WTC11 (cell line): ENCODE measurements at regions of chr16 and their contacts with region 1.

Region 1: DNA sequence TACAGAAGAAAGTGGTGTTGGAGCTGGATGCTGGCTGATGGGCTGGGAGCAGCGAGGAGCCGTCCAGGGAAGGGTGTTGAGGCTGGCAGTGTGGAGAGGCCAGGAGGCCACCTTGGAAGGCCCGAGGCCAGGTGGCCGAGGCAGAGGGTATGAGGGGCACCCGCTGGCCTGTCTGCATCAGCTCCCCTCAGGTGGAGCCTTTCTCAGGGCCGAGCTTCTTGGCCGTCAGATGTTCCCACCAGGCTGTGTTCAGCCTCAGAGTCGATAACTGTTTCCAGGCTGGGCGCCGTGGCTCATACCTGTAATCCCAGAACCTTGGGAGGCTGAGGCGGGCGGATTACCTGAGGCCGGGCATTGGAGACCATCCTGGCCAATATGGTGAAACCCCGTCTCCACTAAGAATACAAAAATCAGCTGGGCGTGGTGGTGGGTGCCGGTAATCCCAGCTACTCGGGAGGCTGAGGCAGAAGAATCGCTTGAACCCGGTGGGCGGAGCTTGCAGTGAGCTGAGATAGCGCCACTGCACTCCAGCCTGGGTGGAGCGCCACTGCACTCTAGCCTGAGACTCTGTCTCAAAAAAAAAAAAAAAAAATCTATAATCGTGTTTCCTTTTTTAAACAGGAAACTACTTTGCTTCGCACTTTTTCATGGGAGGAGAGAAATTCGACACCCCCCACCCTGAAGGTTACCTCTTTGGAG is 25.3 kb downstream of the MGRN1 start:
- DNase-seq: no peak
- ATAC-seq: no peak
- H3K4me3 Mint-ChIP-seq: no peak overlapping the region
- H3K27ac Mint-ChIP-seq: peak overlapping the region; percentile 57; the same call in 1 of the 2 replicates
- H3K4me1 Mint-ChIP-seq: no peaks in the 10 kb centered on the region
- H3K27me3 Mint-ChIP-seq: no peaks in the 10 kb centered on the region; the same call in 1 of the 2 replicates
- CTCF ChIP-seq: no peak

Region 2: DNA sequence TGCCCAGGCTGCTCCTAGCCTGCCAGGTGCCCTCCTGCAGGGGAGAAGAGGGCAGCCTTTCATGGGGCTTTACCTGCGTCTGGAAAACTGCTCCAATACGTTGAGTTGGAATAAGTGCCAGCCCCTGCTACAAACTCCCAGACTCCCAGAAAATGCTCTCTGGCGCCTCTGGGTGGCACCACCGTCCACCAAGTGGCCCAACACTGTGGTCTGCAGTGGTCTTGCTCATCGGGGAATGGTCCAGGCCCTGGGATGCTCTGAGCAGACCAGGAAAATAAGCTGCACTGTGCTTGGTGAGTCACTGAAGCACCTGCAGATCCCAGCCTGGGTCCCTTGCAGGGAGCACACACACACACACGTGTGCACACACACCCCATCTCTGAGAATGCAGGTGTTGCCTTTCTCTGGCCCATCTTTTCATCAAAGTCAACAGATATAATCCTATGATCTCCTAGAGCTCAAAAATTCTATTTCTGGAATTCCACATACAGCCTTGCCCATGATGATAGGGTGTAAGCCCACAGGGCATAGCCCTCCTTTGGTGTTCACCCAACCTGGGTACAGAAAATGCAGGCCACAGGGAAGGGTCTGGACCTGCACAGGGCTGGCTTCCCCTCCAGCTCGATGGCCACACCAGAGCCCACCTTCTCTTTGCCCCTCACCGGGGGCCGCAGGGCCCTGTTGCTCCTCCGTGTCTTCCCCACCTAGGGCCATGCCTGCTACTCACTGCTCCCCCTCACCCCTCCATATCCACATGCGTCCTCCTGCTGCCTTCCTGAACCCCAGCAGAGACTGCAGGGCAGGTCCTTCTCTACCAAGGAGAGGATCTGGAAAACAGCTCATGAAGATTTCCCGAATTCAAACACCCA is 131.8 kb before region 1 on chr16:
- CTCF ChIA-PET with region 1: interaction called, 15 read pairs
- POLR2A ChIA-PET with region 1: no interaction called
- DNase-seq: peak; percentile 80
- ATAC-seq: peak; percentile 89
- H3K4me3 Mint-ChIP-seq: no peak overlapping the region
- H3K27ac Mint-ChIP-seq: peak overlapping the region; percentile 80
- H3K4me1 Mint-ChIP-seq: peaks cover 43% of the 10 kb centered on the region
- H3K27me3 Mint-ChIP-seq: no peaks in the 10 kb centered on the region
- CTCF ChIP-seq: peak; percentile 62

Region 3: DNA sequence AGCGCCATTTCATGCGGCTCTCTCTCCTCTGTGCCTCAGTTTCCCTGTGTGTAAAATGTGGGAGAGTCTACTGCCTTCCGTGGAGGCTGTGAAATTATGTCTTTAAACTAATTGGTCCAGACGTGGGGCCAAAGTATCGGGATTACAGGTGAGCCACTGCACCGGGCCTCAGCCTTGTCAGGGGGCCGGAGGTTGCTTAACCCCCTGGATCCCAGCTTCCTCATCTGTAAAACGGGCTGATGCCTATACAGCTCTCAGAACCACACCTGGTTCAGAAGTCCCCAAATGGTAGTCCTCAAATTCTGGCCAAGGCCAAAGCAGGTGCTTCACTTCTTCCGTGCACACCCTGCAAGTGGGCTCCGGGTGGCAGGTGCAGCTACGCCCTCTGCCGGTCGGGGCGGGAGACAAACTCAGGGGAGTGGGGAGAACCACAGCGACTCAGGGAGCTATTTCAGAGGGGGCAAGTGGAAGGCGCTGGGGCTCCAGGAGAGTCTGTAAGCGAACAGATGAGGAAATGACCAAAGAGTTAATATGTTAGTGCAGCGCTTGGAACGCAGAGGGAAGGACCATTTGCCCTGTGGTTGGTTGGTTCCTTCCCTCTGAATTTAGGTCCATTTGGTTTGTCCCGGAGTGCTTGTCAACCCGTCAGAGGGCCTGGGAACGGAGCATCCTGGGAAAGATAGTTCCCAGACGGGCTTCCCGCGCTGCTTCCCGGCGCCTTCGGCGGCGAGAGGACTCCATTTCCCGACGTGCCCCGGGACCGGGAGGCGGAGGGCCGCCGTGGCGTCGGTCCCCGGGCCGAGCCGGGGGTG is 25.7 kb before region 1 on chr16 and contains the start of gene MGRN1:
- CTCF ChIA-PET with region 1: interaction called, 13 read pairs
- POLR2A ChIA-PET with region 1: no interaction called
- DNase-seq: peak; percentile 94
- ATAC-seq: peak; percentile 93
- H3K4me3 Mint-ChIP-seq: peak within 1 kb of the TSS; percentile 97
- H3K27ac Mint-ChIP-seq: peak within 1 kb of the TSS; percentile 97
- H3K4me1 Mint-ChIP-seq: peaks cover 17% of the 10 kb centered on the region
- H3K27me3 Mint-ChIP-seq: no peaks in the 10 kb centered on the region
- CTCF ChIP-seq: peak; percentile 84
- total RNA-seq, gene MGRN1: 79.4 to 88.8 TPM (median 80.7 TPM) in 3 replicates

Region 4: DNA sequence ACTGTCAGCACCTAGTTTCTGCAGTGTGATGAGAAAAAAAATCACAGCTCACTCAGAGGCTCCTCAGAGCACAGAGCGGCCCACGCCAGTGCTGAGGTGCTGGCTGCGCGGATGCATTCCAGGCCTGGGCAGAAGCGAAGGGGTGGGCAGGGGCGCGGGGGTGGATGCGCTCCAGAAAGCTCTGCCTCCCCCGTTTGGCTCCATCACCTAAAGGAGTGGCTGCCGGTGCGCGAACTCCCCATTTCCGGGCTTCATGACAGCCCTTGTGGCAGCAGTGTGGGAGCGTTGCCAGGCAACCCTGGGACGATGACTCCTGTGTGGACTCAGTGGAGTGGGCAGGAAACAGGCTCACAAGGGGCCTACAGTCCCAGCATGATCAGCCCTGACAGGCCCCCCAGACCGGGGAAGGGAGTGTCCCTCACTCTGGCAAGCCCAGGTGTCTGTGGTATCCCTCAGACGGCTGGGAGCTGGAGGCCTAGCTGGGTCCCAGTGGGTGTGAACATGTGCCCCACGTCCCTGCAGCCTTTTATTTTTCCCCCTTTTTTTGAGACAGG is 10.6 kb after region 1 on chr16:
- CTCF ChIA-PET with region 1: interaction called, 19 read pairs
- POLR2A ChIA-PET with region 1: interaction called, 3 read pairs
- DNase-seq: no peak
- ATAC-seq: no peak
- H3K4me3 Mint-ChIP-seq: no peak overlapping the region
- H3K27ac Mint-ChIP-seq: peak overlapping the region; percentile 78; the same call in 1 of the 2 replicates
- H3K4me1 Mint-ChIP-seq: peaks cover 4% of the 10 kb centered on the region
- H3K27me3 Mint-ChIP-seq: no peaks in the 10 kb centered on the region
- CTCF ChIP-seq: no peak

Region 5: GRCh38 chr16:4682616-4683254 is 32.8 kb after region 1 on chr16:
- CTCF ChIA-PET with region 1: interaction called, 34 read pairs
- POLR2A ChIA-PET with region 1: no interaction called
- DNase-seq: peak; percentile 86
- ATAC-seq: peak; percentile 92
- H3K4me3 Mint-ChIP-seq: no peak overlapping the region
- H3K27ac Mint-ChIP-seq: no peak overlapping the region
- H3K4me1 Mint-ChIP-seq: no peaks in the 10 kb centered on the region
- H3K27me3 Mint-ChIP-seq: no peaks in the 10 kb centered on the region
- CTCF ChIP-seq: peak; percentile 49; the same call in 1 of the 2 replicates

Region 6: GRCh38 chr16:4734063-4734729 is 84.3 kb after region 1 on chr16 and contains the starts of genes ANKS3 and DNAAF8:
- CTCF ChIA-PET with region 1: interaction called, 10 read pairs
- POLR2A ChIA-PET with region 1: no interaction called
- DNase-seq: peak; percentile 95
- ATAC-seq: peak; percentile 94
- H3K4me3 Mint-ChIP-seq: peak within 1 kb of the TSS; percentile 93
- H3K27ac Mint-ChIP-seq: peak within 1 kb of the TSS; percentile 97
- H3K4me1 Mint-ChIP-seq: peaks cover 9% of the 10 kb centered on the region
- H3K27me3 Mint-ChIP-seq: peaks cover 4% of the 10 kb centered on the region; the same call in 1 of the 2 replicates
- CTCF ChIP-seq: no peak
- total RNA-seq, gene ANKS3: 28.6 to 35.6 TPM (median 31.5 TPM) in 3 replicates
- total RNA-seq, gene DNAAF8: 0.09 to 0.41 TPM (median 0.14 TPM) in 3 replicates

Region 7: DNA sequence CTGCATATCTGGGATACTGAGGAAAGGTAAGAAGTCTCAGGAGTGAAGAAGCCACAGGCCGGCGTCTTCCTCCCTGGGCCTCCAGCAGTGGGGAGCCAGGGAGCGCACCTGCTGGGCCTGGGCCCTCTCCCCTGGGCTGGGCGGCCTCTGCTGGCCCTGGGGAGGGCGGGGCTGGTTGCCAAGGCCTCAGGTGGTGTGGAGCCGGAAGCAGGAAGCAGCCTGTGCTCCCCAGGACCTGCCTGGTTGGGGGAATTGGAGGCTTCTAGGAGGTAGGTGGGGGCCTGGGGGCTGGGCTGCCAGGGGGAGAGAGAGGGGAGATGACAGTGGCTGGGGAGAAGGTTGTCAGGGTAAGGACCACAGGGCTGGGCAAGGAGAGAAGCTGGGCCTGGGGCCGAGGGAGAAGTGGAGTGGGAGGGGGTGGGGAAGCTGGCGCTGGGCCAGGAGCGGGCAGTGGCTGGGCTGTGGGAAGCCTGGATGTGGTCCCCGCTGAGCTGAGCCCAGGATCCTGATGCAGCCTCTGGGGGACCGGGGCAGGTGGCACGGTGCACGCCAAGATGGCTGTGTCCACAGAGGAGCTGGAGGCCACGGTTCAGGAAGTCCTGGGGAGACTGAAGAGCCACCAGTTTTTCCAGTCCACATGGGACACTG is 145.4 kb after region 1 on chr16 and contains the start of gene SMIM22:
- CTCF ChIA-PET with region 1: no interaction called
- POLR2A ChIA-PET with region 1: no interaction called
- DNase-seq: no peak
- ATAC-seq: peak; percentile 66
- H3K4me3 Mint-ChIP-seq: no peak within 1 kb of the TSS
- H3K27ac Mint-ChIP-seq: no peak within 1 kb of the TSS
- H3K4me1 Mint-ChIP-seq: no peaks in the 10 kb centered on the region; the same call in 1 of the 2 replicates
- H3K27me3 Mint-ChIP-seq: no peaks in the 10 kb centered on the region
- CTCF ChIP-seq: no peak
- total RNA-seq, gene SMIM22: 1.9 TPM in 1 of 3 replicates, not detected in the others